AG04449 (cell line): ENCODE measurements at regions of chr13 and their contacts with region 1.

Region 1: DNA sequence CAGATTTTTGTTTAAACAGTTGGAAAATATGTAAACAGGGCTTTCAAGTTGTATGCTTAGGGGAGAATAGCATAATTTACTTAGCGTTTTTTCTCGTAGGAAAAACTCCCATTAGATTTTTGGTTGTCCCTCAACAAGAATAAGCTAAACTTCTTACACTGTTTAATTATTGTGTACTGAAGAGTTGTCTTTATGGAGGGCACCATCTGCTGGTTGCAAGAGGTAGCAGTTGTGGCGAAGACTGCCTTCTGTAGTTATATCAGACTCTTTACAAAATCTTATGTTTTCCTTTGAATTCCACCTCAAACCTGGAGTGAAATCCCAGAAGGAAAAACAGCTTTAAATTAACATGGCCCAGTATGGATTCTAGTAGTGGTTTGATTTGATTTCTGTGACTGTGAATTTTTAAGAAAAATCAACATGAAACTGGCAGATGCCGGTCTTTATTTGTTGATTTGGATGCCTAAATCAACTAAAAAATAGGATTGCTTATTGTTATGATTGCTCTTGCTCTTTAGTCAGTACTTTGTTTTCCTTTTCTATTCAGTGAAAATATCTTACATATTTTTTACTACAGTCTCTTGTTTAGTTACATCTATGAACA is 53.4 kb downstream of the PDS5B start:
- DNase-seq: peak; percentile 36
- H3K4me3 ChIP-seq: no peak overlapping the region
- CTCF ChIP-seq: peak; percentile 73

Region 2: GRCh38 chr13:32581177-32581786 is 58.3 kb before region 1 on chr13:
- CTCF ChIA-PET with region 1: interaction called, 33 read pairs
- POLR2A ChIA-PET with region 1: no interaction called
- DNase-seq: no peak
- H3K4me3 ChIP-seq: no peak overlapping the region
- CTCF ChIP-seq: peak; percentile 14

Region 3: GRCh38 chr13:32594157-32594738 is 45.4 kb before region 1 on chr13:
- CTCF ChIA-PET with region 1: interaction called, 50 read pairs
- POLR2A ChIA-PET with region 1: no interaction called
- DNase-seq: no peak
- H3K4me3 ChIP-seq: no peak overlapping the region
- CTCF ChIP-seq: no peak

Region 4: DNA sequence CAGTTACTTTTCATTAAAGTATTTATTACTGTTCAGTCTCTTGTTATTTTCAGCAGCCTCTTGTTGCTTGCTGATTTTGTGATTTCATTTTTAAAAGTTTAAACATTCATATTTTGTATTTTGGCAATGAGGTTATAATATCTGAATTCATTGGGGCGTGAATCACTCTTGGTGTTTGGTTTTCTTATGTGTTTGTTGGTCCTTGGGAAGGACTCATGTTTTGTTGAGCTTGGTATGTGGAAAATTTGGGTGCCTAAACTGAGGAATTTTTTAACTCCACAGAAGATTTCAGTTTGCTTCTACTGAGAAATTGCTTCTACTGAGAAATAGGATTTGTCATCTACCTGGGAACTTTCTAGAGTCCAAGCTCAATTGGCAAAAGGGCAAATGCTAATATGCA is 15.2 kb before region 1 on chr13:
- CTCF ChIA-PET with region 1: interaction called, 13 read pairs
- POLR2A ChIA-PET with region 1: no interaction called
- DNase-seq: no peak
- H3K4me3 ChIP-seq: no peak overlapping the region
- CTCF ChIP-seq: no peak

Region 5: DNA sequence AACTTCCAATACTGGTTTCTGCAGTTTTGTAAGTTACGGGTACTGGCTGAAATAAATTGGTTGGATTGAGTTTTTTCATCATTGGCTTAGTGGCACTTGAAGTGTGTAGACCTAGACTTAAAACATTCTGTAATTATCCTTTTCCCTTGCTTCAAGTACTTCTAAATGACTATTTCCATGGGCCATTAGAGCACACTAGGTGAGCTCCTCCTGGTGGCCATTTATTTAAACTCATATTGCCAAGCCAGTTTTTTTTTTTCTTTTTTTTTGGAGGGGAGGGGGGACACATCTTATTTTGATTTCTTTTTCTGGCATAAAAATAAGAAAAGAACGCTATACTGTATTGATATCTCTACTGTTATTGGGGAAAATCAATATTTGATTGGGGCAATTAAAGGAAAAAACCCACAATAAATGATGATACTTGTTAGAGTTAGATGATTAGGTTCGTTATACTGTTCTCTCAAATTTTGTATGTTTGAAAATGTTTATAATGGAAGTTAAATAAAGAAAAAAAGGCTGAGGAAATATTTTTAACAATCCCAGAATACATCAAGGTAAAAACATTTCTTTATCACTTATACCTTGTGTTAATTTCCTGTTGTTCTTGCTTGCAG is 29.5 kb after region 1 on chr13:
- CTCF ChIA-PET with region 1: interaction called, 13 read pairs
- POLR2A ChIA-PET with region 1: no interaction called
- DNase-seq: no peak
- H3K4me3 ChIP-seq: no peak overlapping the region
- CTCF ChIP-seq: peak; percentile 34